ENCODE measurements at regions of chr19 and their contacts with region 1.

Region 1: GRCh38 chr19:14073261-14073924 is 807 bp downstream of the MISP3 start:
- DNase-seq: peak; percentile 72

Region 2: GRCh38 chr19:13880059-13881043 is 193.0 kb before region 1 on chr19:
- in situ Hi-C with region 1: loop called (anchors 25 kb)
- DNase-seq: peak; percentile 98

Region 3: DNA sequence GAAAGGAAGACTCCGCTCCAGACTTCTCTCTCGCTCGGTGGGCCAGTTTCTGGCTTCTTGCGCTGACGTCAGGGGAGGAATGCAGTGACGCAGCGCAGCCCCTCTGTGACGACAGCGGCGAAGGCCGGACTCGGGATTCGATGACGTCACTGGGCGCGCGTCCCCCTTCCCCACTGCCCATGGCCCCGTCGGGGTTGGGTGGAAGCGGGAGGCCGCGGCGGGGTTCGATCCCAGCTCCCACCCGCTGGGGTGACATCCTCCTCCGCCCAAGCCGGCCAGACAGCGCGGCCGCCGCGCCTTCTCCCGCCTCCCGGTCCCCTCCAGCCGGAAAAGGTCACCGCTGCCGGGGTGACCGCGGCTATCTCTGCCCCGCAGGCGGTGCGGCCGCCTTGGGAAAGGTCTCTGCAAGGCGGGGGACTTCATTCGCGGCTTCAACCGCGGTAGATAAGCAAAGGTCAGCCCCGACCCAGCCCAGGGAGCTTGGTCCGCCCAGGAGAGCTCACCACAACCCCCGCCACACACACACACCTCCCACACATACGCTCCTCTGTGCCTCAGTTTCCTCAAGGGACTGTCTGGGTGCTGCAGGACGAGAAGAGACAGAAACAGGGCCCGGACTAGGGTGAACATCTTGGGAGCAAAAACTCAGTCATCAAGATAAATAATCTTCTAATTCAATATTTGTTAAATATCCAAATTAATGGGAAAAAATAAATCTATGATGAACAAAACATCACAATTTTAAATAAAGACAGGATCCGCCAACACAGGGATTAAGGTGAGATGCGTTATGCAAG is 66.4 kb before region 1 on chr19:
- in situ Hi-C with region 1: no loop called
- DNase-seq: no peak